ENCODE measurements at regions of chrX and their contacts with region 1.

Region 1: GRCh38 chrX:129115104-129115503 is 408.2 kb downstream of the SMARCA1 start:
- DNase-seq: peak; percentile 50 to 62
- H3K4me3 ChIP-seq: no peak overlapping the region
- H3K4me3 Mint-ChIP-seq: no peak overlapping the region
- H3K27ac Mint-ChIP-seq: no peak overlapping the region
- H3K4me1 ChIP-seq: no peaks in the 10 kb centered on the region
- H3K4me1 Mint-ChIP-seq: no peaks in the 10 kb centered on the region
- H3K27me3 ChIP-seq: no peaks in the 10 kb centered on the region
- H3K27me3 Mint-ChIP-seq: no peaks in the 10 kb centered on the region
- CTCF ChIP-seq: no peak

Region 2: GRCh38 chrX:128106630-128107029 is 1008.5 kb before region 1 on chrX:
- CTCF ChIA-PET with region 1: no interaction called
- POLR2A ChIA-PET with region 1: no interaction called
- intact Hi-C with region 1: loop called (anchors 10 kb)
- DNase-seq: peak in 1 of 2 experiments; percentile 1
- H3K4me3 ChIP-seq: no peak overlapping the region
- H3K4me3 Mint-ChIP-seq: no peak overlapping the region
- H3K27ac Mint-ChIP-seq: no peak overlapping the region
- H3K4me1 ChIP-seq: no peaks in the 10 kb centered on the region
- H3K4me1 Mint-ChIP-seq: no peaks in the 10 kb centered on the region
- H3K27me3 ChIP-seq: no peaks in the 10 kb centered on the region
- H3K27me3 Mint-ChIP-seq: peaks cover 4% of the 10 kb centered on the region
- CTCF ChIP-seq: peak; percentile 19 to 31

Region 3: DNA sequence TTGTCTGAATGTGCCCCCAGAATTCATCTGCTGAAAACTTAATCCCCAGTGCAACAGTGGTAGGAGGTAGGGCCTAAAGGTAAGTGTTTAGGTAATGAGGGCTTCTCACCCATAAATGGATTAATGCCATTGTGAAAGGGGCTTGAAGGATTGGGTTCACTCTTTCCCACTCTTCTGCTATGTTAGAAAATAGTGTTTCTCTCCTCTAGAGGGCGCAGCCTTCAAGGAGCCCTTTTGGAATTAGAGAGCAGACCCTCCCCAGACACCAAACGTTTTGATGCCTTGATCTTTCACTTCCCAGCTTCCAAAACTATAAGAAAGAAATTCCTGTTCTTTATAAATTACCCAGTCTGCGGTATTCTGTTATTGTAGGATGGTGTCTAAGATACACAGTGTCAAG is 298.2 kb before region 1 on chrX:
- CTCF ChIA-PET with region 1: no interaction called
- POLR2A ChIA-PET with region 1: no interaction called
- intact Hi-C with region 1: loop called (anchors 5 kb)
- DNase-seq: peak in 1 of 2 experiments; percentile 2
- H3K4me3 ChIP-seq: no peak overlapping the region
- H3K4me3 Mint-ChIP-seq: no peak overlapping the region
- H3K27ac Mint-ChIP-seq: no peak overlapping the region
- H3K4me1 ChIP-seq: no peaks in the 10 kb centered on the region
- H3K4me1 Mint-ChIP-seq: no peaks in the 10 kb centered on the region
- H3K27me3 ChIP-seq: no peaks in the 10 kb centered on the region
- H3K27me3 Mint-ChIP-seq: no peaks in the 10 kb centered on the region
- CTCF ChIP-seq: peak in 1 of 2 experiments; percentile 40

Region 4: GRCh38 chrX:129013574-129013973 is 101.5 kb before region 1 on chrX:
- CTCF ChIA-PET with region 1: no interaction called
- POLR2A ChIA-PET with region 1: no interaction called
- intact Hi-C with region 1: loop called (anchors 10 kb)
- DNase-seq: no peak
- H3K4me3 ChIP-seq: no peak overlapping the region
- H3K4me3 Mint-ChIP-seq: no peak overlapping the region
- H3K27ac Mint-ChIP-seq: no peak overlapping the region
- H3K4me1 ChIP-seq: no peaks in the 10 kb centered on the region
- H3K4me1 Mint-ChIP-seq: no peaks in the 10 kb centered on the region
- H3K27me3 ChIP-seq: no peaks in the 10 kb centered on the region
- H3K27me3 Mint-ChIP-seq: no peaks in the 10 kb centered on the region
- CTCF ChIP-seq: no peak

Region 5: GRCh38 chrX:129577473-129577872 is 462.4 kb after region 1 on chrX:
- CTCF ChIA-PET with region 1: no interaction called
- POLR2A ChIA-PET with region 1: no interaction called
- intact Hi-C with region 1: no loop called
- DNase-seq: no peak
- H3K4me3 ChIP-seq: no peak overlapping the region
- H3K4me3 Mint-ChIP-seq: no peak overlapping the region
- H3K27ac Mint-ChIP-seq: no peak overlapping the region
- H3K4me1 ChIP-seq: no peaks in the 10 kb centered on the region
- H3K4me1 Mint-ChIP-seq: no peaks in the 10 kb centered on the region
- H3K27me3 ChIP-seq: no peaks in the 10 kb centered on the region
- H3K27me3 Mint-ChIP-seq: no peaks in the 10 kb centered on the region
- CTCF ChIP-seq: no peak